HEK293 (cell line): ENCODE measurements at regions of chr9 and their contacts with region 1.

Region 1: GRCh38 chr9:134171316-134172197 is 7.2 kb upstream of the RNU6ATAC start:
- H3K4me3 ChIP-seq: no peak overlapping the region
- H3K27ac ChIP-seq: no peak overlapping the region
- H3K4me1 ChIP-seq: no peaks in the 10 kb centered on the region
- CTCF ChIP-seq: no peak

Region 2: DNA sequence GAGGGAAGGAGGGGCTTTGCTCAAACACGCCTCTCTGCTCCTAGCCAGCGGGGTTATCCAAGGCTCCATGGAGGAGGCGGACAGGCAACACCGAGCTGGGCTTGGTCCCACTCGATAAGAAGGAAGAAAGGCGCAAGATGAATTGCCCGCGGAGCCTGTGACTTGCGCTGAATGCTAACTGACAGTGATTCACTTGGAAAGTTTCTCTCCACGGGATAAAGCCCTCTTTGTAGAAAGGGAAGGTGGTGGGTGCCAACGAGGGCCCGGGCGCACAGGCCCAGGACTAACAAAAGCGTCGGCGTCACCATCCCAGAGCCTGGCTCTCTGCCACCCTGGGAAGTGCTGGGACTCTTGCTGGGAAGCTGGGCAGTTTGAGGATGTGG is 255.4 kb before region 1 on chr9:
- CTCF ChIA-PET with region 1: no interaction called
- POLR2A ChIA-PET with region 1: no interaction called
- H3K4me3 ChIP-seq: no peak overlapping the region
- H3K27ac ChIP-seq: no peak overlapping the region
- H3K4me1 ChIP-seq: no peaks in the 10 kb centered on the region
- CTCF ChIP-seq: no peak

Region 3: GRCh38 chr9:134099123-134099787 is 72.3 kb before region 1 on chr9:
- CTCF ChIA-PET with region 1: no interaction called
- POLR2A ChIA-PET with region 1: no interaction called
- H3K4me3 ChIP-seq: no peak overlapping the region
- H3K27ac ChIP-seq: no peak overlapping the region
- H3K4me1 ChIP-seq: no peaks in the 10 kb centered on the region
- CTCF ChIP-seq: peak; percentile 71

Region 4: DNA sequence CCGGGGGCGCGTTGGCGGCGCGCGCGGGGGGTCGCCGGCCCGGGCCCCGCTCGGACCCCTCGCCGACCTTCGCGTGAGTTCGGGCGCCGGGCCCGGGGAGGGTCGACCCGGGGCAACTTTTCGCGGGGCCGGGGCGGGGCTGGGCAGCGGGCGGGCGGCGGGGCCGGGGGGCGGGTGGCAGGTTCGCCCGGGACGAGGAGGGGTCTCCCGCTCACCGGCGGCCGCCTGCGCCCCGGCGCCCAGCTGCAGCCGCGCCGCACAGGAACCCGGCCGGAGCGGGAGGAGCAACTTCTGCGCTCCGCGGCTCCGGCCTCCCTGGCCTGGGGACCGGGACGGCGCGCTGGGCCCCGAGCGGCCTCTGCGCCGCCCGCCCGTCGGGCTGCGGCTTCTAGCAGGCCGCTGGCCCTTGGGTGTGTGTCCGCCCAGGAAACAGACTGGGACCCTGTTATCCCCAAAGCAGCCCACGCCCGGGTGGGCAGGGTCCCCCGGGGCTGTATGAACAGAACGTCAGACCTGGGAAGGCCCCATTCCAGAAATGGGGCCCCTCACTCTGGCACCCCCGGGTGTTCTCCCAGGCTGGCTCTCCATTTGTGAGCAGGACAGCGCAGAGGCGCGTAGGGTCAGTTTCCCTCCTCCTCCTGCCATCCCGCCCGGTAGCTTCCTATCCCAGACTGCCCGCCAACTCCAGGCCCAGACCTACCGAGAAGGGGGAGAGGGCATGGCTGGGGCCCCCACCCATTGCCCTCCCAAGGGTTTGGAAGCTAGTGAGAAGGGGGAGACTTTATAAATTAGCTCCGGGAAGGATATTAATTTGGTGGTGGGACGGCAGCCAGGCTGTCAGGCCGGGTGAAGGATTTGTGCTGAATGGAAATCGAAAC is 155.4 kb after region 1 on chr9:
- CTCF ChIA-PET with region 1: interaction called, 13 read pairs
- POLR2A ChIA-PET with region 1: interaction called, 3 read pairs
- H3K4me3 ChIP-seq: peak overlapping the region; percentile 64
- H3K27ac ChIP-seq: peak overlapping the region; percentile 47; the same call in 1 of the 2 replicates
- H3K4me1 ChIP-seq: no peaks in the 10 kb centered on the region
- CTCF ChIP-seq: no peak

Region 5: GRCh38 chr9:134434894-134435506 is 263.4 kb after region 1 on chr9:
- CTCF ChIA-PET with region 1: interaction called, 14 read pairs
- POLR2A ChIA-PET with region 1: interaction called, 3 read pairs
- H3K4me3 ChIP-seq: no peak overlapping the region
- H3K27ac ChIP-seq: peak overlapping the region; percentile 70
- H3K4me1 ChIP-seq: peaks cover 4% of the 10 kb centered on the region; the same call in 1 of the 2 replicates
- CTCF ChIP-seq: no peak